Activated T-helper 2 cell treated with anti-CD3 and anti-CD28 coated beads, Interferon-gamma antibody, Interleukin-2, Interleukin-4, amounts not matched to agents 10 μg/mL and 5 μg/mL and 100 μg/mL, durations not matched to agents 14 hours and 24 hours and 36 hours (primary cell): ENCODE measurements at regions of chr9 and their contacts with region 1.

Region 1: DNA sequence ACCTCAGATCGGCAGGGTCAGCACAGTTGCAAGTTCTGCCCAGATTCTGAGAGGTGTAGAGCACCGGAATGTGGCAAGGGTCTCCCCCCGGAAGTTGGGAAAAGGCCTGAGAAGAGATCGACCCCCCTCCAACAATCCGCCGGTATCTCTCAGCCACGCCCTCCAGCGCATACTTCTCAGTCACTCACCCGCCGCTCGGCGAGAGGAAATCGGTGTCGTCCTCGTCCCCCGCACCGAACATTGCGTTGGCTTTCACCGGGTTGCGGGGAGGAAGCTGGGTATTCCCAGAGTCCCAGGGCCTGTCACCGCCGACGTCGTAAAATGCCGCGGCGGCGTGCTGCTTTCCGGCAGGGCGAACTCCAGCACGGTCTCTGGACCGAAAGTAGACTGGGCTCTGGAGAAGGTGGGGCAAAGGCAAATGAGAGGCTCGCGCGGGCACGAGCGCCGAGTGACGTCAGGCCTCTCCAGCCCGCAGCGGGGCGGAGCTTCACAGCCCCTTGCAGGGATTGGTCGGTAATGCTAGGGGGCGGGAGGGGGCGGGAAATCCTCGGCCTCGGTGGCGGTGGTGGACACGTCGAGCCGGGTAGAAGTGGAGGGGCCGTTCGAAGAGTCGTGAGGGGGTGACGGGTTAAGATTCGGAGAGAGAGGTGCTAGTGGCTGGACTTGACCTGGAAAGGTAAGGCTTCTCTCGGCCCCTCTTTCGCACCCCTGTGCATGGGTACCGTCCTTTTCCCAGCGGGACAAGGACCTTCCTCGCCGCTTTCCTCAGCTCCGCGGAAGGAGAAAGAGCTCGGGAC is at the starts of genes FKBP15 and SLC31A1:
- DNase-seq: peak; percentile 94
- H3K4me3 Mint-ChIP-seq: peak within 1 kb of the TSS; percentile 92
- H3K27ac Mint-ChIP-seq: peak within 1 kb of the TSS; percentile 78
- H3K4me1 Mint-ChIP-seq: peaks cover 41% of the 10 kb centered on the region
- H3K27me3 Mint-ChIP-seq: no peaks in the 10 kb centered on the region
- total RNA-seq, gene FKBP15: 39.6 and 40.4 TPM in 2 replicates
- total RNA-seq, gene SLC31A1: 18.0 and 20.0 TPM in 2 replicates

Region 2: DNA sequence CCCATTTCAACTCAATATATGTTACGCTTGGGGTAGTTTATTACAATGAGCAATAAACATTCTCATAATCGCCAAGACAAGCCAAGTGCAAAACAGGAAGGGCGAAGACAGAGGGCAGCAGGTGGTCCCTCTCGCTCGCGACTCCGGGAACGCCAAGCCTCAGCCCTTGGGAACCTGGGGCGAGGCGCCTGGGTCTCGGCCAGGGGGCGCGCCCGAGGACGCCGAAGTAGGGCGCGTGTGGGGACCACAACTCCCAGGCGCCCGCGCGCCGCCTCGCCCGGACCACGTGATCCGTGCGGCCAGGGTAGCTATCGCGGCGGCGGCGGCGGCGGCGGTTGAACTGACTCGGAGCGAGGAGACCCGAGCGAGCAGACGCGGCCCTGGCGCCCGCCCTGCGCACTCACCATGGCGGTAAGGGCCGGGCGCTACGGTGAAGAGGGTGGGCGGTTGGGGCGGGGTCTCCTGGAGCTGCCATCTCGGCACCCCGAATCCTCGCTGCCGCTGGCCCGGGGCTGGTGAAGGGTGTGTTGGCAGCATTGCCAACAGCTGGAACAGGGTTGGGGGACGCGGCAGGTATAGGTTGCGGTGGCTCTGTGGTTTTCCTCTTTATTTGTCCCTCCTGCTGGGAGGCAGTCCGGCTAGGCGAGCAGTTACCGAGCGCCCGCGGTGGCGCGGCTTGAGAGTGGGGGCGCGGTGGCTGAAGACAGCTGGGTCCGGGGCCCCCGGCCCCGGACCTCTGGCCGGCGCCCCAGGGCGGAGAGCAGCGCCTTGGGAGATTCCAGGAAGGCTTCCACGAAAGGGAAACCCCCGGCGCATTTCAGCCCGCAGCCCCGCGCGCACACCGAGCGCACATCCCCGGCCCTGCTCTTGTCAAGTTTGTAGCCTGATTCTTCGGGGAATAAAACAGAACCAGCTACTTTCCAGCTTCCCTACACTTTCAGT is 70.3 kb before region 1 on chr9 and contains the start of gene SLC31A2:
- intact Hi-C with region 1: loop called (anchors 2 kb)
- DNase-seq: peak; percentile 82
- H3K4me3 Mint-ChIP-seq: peak within 1 kb of the TSS; percentile 79
- H3K27ac Mint-ChIP-seq: peak within 1 kb of the TSS; percentile 42
- H3K4me1 Mint-ChIP-seq: peaks cover 31% of the 10 kb centered on the region
- H3K27me3 Mint-ChIP-seq: peaks cover 11% of the 10 kb centered on the region
- total RNA-seq, gene SLC31A2: 4.7 and 5.0 TPM in 2 replicates

Region 3: DNA sequence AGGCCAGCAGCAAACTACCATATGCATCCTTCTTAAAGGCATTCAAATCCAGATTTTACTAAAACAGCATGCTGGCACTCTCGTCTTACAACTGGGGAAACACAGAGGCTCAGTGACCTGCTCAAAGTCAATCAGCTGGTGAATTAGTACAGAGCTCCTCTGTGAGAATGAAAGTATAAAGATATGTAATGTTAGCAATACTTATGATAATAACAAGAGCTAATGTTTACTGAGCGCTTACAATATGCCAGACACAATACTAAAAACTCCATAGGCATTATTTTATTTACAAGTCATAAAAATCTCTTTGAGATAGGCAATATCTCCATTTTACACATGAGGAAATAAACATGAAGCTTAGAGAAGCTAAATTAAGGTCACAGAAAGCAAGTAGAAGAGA is 28.7 kb before region 1 on chr9:
- intact Hi-C with region 1: no loop called
- DNase-seq: no peak
- H3K4me3 Mint-ChIP-seq: no peak overlapping the region
- H3K27ac Mint-ChIP-seq: no peak overlapping the region
- H3K4me1 Mint-ChIP-seq: peaks cover 4% of the 10 kb centered on the region
- H3K27me3 Mint-ChIP-seq: no peaks in the 10 kb centered on the region

Region 4: GRCh38 chr9:113269355-113269754 is 48.2 kb after region 1 on chr9:
- intact Hi-C with region 1: loop called (anchors 1 kb)
- DNase-seq: no peak
- H3K4me3 Mint-ChIP-seq: no peak overlapping the region
- H3K27ac Mint-ChIP-seq: peak overlapping the region; percentile 81
- H3K4me1 Mint-ChIP-seq: peaks cover 17% of the 10 kb centered on the region
- H3K27me3 Mint-ChIP-seq: no peaks in the 10 kb centered on the region